ENCODE measurements at regions of chr10 and their contacts with region 1.

Region 1: DNA sequence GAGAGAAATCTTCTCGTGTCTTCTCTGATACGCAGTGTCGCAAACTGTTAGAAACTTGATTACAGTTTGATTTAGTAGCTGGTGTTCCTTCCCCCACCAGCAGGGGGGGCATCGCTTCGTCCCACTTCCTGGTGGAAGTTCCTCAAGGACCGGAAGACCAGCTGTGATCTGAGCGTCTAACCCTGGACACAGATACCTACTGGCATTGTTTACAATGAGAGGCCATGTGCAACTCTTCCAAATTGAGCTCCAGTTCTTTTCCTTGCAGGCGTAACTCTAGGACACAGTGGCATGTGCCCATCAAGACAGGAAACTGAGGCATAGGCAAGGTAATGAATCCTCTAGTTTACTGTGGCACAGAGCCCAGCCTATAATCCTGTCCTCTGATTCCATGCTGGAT is 219.0 kb downstream of the CCDC3 start:
- DNase-seq: peak; percentile 53
- H3K27ac ChIP-seq: no peak overlapping the region
- CTCF ChIP-seq: peak; percentile 69

Region 2: DNA sequence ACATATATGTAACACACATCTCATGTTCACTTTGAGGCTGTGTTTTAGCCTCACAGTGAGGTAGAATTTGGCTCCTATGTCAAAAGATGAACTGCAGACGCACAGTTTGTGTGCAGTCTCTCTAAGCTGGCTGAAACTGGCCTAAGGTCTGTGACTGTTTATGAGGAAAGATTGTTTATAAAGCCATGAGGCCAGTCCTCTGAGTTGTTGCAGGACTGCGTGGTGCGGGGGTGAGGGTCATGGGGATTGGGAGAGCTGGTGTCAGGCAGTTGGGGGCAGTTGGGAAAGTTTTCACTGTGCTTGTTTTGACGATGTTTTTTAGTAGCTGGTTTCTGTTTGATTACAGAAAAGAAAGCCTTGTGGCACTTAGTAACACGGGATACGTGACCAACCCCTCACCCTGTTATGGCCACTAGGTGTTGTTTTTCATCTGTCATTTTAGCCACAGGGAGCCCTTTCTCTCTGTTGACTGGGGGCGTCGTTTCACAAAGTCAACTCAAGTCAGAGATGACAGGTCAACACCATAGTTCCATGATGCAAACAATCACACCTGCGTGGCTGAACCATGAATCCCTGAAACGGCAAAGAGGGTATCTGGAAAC is 91.9 kb before region 1 on chr10:
- CTCF ChIA-PET with region 1: no interaction called
- POLR2A ChIA-PET with region 1: no interaction called
- DNase-seq: no peak
- H3K27ac ChIP-seq: no peak overlapping the region
- CTCF ChIP-seq: no peak

Region 3: GRCh38 chr10:12902135-12902572 is 119.6 kb after region 1 on chr10:
- CTCF ChIA-PET with region 1: interaction called, 17 read pairs
- POLR2A ChIA-PET with region 1: no interaction called
- DNase-seq: peak; percentile 75
- H3K27ac ChIP-seq: no peak overlapping the region
- CTCF ChIP-seq: peak; percentile 77